ENCODE measurements at regions of chr4 and their contacts with region 1.

Region 1: DNA sequence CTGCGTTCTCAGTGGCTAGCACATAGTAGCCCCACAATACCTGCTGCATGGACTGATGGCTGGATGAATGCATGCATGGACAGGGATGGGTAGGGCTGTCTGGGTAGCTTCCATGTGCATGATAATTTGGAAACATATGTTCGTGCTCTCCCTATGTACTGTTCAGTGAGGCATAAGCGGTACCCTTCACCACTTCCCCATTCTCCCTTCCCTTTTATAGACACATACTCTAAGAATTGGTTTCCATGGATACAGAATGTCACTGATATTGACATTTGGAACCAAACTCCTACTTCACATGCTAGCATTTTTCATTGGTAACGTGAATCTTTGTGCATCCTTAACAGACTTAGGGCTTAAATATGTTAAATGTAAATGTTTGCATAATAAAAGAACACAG is 20.4 kb downstream of the USP46 start:
- DNase-seq: no peak
- H3K4me3 ChIP-seq: no peak overlapping the region
- H3K27ac ChIP-seq: no peak overlapping the region
- H3K4me1 ChIP-seq: peaks cover 32% of the 10 kb centered on the region
- H3K27me3 ChIP-seq: no peaks in the 10 kb centered on the region
- CTCF ChIP-seq: no peak
- POLR2A ChIP-seq: no peak

Region 2: GRCh38 chr4:52576857-52577623 is 61.7 kb before region 1 on chr4:
- intact Hi-C with region 1: loop called (anchors 10 kb)
- DNase-seq: no peak
- H3K4me3 ChIP-seq: no peak overlapping the region
- H3K27ac ChIP-seq: no peak overlapping the region
- H3K4me1 ChIP-seq: no peaks in the 10 kb centered on the region
- H3K27me3 ChIP-seq: no peaks in the 10 kb centered on the region
- CTCF ChIP-seq: no peak
- POLR2A ChIP-seq: no peak

Region 3: GRCh38 chr4:52750819-52751486 is 112.2 kb after region 1 on chr4 and contains the start of gene ERVMER34-1:
- intact Hi-C with region 1: no loop called
- DNase-seq: peak; percentile 78
- H3K4me3 ChIP-seq: peak within 1 kb of the TSS; percentile 56 to 67
- H3K27ac ChIP-seq: peak within 1 kb of the TSS; percentile 44 to 61
- H3K4me1 ChIP-seq: peaks cover 7% of the 10 kb centered on the region
- H3K27me3 ChIP-seq: no peaks in the 10 kb centered on the region
- CTCF ChIP-seq: no peak
- POLR2A ChIP-seq: no peak
- total RNA-seq, gene ERVMER34-1: 2.4 to 3.5 TPM

Region 4: DNA sequence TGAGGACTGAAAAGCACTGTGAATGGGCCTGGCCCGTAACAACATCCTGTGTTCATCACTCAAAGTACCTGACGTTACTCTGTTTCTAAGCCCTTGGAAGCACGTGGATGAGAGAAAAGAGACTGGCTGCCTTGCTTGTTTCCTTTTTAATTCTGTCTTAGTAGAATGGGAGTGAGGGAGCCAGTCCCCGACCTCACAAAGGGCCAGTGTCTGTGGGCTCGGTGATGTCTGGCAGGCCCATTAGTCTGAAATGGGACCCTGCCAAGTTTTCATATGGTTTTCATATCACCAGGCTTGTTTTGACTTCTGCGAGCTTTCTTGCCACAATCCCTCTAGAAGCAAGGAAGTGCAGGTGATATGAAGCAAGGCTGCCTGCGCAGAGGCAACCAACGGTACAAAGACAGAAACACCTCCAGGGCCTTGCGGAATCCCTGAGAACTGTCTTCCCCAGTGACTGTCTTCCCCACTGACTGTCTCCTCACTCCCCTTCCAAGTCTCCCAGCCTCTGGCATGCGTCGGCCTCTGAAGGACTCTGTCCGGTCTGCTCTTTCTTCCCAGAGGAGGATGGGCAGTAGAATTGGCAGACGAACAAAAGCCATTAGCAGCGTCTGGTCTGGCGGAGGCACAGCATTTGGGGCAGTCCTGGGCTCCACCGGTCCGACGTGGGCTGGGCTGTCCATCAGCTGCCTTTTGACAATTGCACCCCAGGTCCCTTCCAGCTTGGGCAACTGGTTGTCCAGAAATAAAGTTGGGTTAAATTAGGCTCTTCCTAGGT is 203.2 kb after region 1 on chr4:
- intact Hi-C with region 1: no loop called
- DNase-seq: no peak
- H3K4me3 ChIP-seq: no peak overlapping the region
- H3K27ac ChIP-seq: no peak overlapping the region
- H3K4me1 ChIP-seq: peaks cover 28% of the 10 kb centered on the region
- H3K27me3 ChIP-seq: no peaks in the 10 kb centered on the region
- CTCF ChIP-seq: no peak
- POLR2A ChIP-seq: no peak